HepG2 (cell line): ENCODE measurements at regions of chr16 and their contacts with region 1.

Region 1: DNA sequence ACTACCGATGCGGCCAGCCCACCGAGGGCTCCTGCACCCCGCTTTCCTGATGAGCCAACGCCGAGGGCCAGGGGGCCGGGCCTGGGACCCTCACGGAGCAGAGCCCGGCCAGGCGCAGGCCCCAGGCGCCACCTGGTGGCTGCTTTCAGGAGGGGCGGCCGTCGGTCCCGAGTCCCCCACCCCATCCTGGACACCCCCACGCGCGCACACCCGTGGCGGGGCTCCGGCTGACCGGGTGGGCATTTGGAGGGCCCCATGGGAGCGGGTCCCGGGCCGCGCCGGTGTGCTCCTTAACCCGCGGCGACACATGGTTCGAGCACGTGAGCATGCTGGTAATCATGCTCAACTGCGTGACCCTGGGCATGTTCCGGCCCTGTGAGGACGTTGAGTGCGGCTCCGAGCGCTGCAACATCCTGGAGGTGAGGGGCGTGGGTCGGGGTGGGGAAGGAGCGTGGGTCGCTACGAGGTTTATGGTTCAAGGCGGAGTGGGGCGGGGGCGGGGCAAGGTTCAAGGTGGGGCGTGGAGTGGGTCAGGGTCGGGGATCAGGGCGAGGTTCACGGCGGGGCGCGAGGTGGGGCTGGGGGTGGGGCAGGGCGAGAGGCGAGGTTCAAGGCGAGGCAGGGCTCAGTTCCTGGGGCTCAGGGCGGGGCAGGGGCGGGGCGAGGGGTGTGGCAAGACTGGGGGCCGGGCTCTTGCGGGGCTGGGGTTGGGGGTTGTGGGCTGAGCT is 30.2 kb downstream of the TPSG1 start:
- DNase-seq: no peak
- ATAC-seq: peak; percentile 48
- H3K4me3 ChIP-seq: no peak overlapping the region
- H3K27ac ChIP-seq: no peak overlapping the region
- H3K4me1 ChIP-seq: peaks cover 31% of the 10 kb centered on the region
- H3K27me3 ChIP-seq: peaks cover 2 to 33% of the 10 kb centered on the region in 2 experiments; a peak in 4 of 5 replicates
- CTCF ChIP-seq: peak; percentile 86
- EP300 ChIP-seq: no peak
- POLR2A ChIP-seq: no peak
- RAD21 ChIP-seq: peak; percentile 96

Region 2: GRCh38 chr16:1113889-1114526 is 80.8 kb before region 1 on chr16:
- CTCF ChIA-PET with region 1: no interaction called
- POLR2A ChIA-PET with region 1: no interaction called
- in situ Hi-C with region 1: loop called (anchors 5 kb)
- intact Hi-C with region 1: no loop called
- DNase-seq: no peak
- ATAC-seq: no peak
- H3K4me3 ChIP-seq: no peak overlapping the region
- H3K27ac ChIP-seq: no peak overlapping the region
- H3K4me1 ChIP-seq: peaks cover 18% of the 10 kb centered on the region
- H3K27me3 ChIP-seq: peaks cover 23 to 59% of the 10 kb centered on the region in 2 experiments
- CTCF ChIP-seq: no peak
- EP300 ChIP-seq: no peak
- POLR2A ChIP-seq: no peak
- RAD21 ChIP-seq: no peak